HCT116 (cell line): ENCODE measurements at regions of chr18 and their contacts with region 1.

Region 1: GRCh38 chr18:9273221-9273620 is 61.4 kb upstream of the TWSG1 start:
- DNase-seq: no peak
- ATAC-seq: no peak
- H3K4me3 ChIP-seq: no peak overlapping the region
- H3K27ac ChIP-seq: no peak overlapping the region
- H3K4me1 ChIP-seq: no peaks in the 10 kb centered on the region
- H3K27me3 ChIP-seq: no peaks in the 10 kb centered on the region
- CTCF ChIP-seq: no peak
- POLR2A ChIP-seq: no peak
- RAD21 ChIP-seq: no peak

Region 2: DNA sequence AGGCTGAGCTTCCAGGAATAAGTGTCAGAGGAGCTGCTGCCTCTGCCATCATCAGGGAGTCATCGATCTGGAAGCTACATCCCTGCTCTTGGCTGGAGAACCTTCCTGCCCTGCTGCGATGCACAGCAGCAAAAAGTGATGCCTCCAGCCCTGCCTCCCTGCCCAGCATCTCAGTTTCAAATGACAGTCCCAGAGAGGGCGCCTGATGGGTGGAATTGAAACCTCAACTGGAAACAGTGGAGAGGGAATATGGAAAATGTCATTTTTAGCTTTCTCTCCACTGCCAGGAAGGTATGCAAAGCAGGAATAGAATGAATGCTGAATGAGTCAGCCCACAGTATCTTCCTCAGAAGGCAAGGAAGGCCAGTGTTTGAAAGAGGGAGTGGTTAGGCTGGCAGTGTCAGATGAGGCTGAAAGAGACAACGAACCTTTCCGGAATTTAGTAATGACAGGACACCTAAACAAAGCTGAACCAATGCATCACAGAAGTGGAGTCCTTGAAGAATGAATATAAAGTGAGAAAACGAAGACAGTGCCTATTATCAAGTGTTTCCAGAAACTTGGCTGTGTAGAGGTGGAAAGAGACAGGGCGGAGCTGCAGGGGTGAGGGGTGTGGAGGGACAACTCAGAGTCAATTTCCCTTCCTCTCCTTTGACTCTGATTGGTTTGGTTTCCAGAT is 324.6 kb before region 1 on chr18:
- CTCF ChIA-PET with region 1: no interaction called
- POLR2A ChIA-PET with region 1: no interaction called
- RAD21 ChIA-PET with region 1: no interaction called
- intact Hi-C with region 1: no loop called
- DNase-seq: no peak
- ATAC-seq: peak; percentile 71; the same call in 1 of the 2 replicates
- H3K4me3 ChIP-seq: no peak overlapping the region
- H3K27ac ChIP-seq: no peak overlapping the region
- H3K4me1 ChIP-seq: peaks cover 0 to 53% of the 10 kb centered on the region in 2 experiments; a peak in 3 of 4 replicates
- H3K27me3 ChIP-seq: no peaks in the 10 kb centered on the region
- CTCF ChIP-seq: no peak
- POLR2A ChIP-seq: no peak
- RAD21 ChIP-seq: no peak

Region 3: GRCh38 chr18:9147440-9148202 is 125.6 kb before region 1 on chr18:
- CTCF ChIA-PET with region 1: no interaction called
- POLR2A ChIA-PET with region 1: no interaction called
- RAD21 ChIA-PET with region 1: no interaction called
- intact Hi-C with region 1: no loop called
- DNase-seq: peak; percentile 48
- ATAC-seq: peak; percentile 89
- H3K4me3 ChIP-seq: no peak overlapping the region
- H3K27ac ChIP-seq: no peak overlapping the region
- H3K4me1 ChIP-seq: peaks cover 0 to 5% of the 10 kb centered on the region in 2 experiments; a peak in 2 of 4 replicates
- H3K27me3 ChIP-seq: no peaks in the 10 kb centered on the region
- CTCF ChIP-seq: peak; percentile 63 to 71 (median 69); a peak in 5 of 6 replicates
- POLR2A ChIP-seq: no peak
- RAD21 ChIP-seq: peak; percentile 85

Region 4: GRCh38 chr18:9221040-9221439 is 52.2 kb before region 1 on chr18:
- CTCF ChIA-PET with region 1: no interaction called
- POLR2A ChIA-PET with region 1: no interaction called
- RAD21 ChIA-PET with region 1: no interaction called
- intact Hi-C with region 1: loop called (anchors 5 kb)
- DNase-seq: no peak
- ATAC-seq: no peak
- H3K4me3 ChIP-seq: no peak overlapping the region
- H3K27ac ChIP-seq: no peak overlapping the region
- H3K4me1 ChIP-seq: no peaks in the 10 kb centered on the region
- H3K27me3 ChIP-seq: no peaks in the 10 kb centered on the region
- CTCF ChIP-seq: no peak
- POLR2A ChIP-seq: no peak
- RAD21 ChIP-seq: no peak